Activated T-helper 2 cell treated with anti-CD3 and anti-CD28 coated beads, Interferon-gamma antibody, Interleukin-2, Interleukin-4, amounts not matched to agents 10 μg/mL and 5 μg/mL and 100 μg/mL, durations not matched to agents 14 hours and 24 hours and 36 hours (primary cell): ENCODE measurements at regions of chrX and their contacts with region 1.

Region 1: DNA sequence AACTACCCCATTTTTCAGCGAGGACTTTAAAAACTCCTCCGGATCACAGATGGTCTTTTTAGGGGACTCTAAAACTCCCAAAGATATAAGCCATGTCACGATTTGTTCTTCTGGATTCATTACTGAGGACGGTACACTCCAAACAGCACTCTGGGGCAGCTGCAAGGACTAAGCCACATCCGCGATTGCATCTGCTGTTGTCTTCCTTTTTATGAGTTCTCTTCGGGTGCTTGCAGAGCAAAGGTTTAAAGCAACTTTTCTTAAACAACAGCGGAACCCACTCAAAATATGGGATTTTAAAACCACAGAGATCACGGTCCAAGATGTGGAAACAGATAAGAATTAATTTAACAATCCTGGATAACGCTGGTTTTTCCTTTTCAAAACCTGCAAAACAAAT is at the start of gene ARHGEF6:
- DNase-seq: no peak
- H3K4me3 Mint-ChIP-seq: peak within 1 kb of the TSS; percentile 90
- H3K27ac Mint-ChIP-seq: peak within 1 kb of the TSS; percentile 97
- H3K4me1 Mint-ChIP-seq: peaks cover 56% of the 10 kb centered on the region
- H3K27me3 Mint-ChIP-seq: no peaks in the 10 kb centered on the region
- total RNA-seq, gene ARHGEF6: 77.2 and 77.9 TPM in 2 replicates

Region 2: DNA sequence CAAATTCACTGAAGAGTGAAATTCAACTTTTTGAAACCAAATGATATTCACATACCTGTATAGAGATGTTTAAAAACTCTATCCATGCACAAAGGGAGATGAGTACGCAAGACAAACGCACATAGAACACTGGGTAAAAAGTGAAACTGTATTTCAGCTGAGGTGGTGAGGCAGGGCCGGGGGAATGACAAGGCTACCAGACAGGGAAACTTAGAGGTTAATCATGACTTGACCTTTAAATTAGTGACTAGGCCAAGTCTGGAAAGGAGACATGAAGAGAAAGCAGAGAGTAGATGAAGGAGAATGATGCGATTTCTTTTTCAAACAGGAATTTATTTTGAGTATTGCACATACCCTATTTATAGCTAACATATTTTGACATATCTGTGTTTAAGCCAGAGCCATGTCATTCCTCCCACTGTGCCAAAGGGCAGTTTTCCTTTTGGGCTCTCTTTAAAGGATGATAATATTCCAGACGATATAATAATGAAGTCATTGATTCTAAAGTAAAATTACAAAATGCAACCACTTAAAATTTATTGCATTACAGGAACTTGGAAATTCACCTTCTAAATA is 49.5 kb before region 1 on chrX:
- intact Hi-C with region 1: loop called (anchors 5 kb)
- DNase-seq: no peak
- H3K4me3 Mint-ChIP-seq: peak overlapping the region; percentile 30
- H3K27ac Mint-ChIP-seq: peak overlapping the region; percentile 77
- H3K4me1 Mint-ChIP-seq: peaks cover 48% of the 10 kb centered on the region
- H3K27me3 Mint-ChIP-seq: no peaks in the 10 kb centered on the region

Region 3: GRCh38 chrX:136767104-136767941 is 13.4 kb before region 1 on chrX:
- intact Hi-C with region 1: loop called (anchors 1 kb)
- DNase-seq: no peak
- H3K4me3 Mint-ChIP-seq: peak overlapping the region; percentile 78
- H3K27ac Mint-ChIP-seq: peak overlapping the region; percentile 93
- H3K4me1 Mint-ChIP-seq: peaks cover 56% of the 10 kb centered on the region
- H3K27me3 Mint-ChIP-seq: no peaks in the 10 kb centered on the region

Region 4: DNA sequence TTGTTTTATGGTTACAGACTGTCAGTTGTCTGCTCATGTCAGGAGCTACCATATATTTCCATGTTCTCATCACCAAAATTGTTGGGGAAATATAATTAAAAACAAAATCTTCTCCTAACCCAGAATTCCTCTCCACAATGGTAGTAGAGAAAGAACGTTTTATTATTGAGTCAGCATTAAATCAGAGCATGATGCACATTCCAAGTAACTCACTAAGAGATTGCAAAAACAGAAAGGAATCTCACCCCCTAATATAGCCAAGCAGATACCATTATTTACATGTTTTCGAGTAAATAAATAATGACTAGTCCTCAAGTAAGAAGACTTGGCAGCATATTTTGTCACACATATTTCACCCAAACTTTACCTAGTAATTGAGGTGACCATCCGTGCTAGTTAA is 36.2 kb after region 1 on chrX:
- intact Hi-C with region 1: no loop called
- DNase-seq: no peak
- H3K4me3 Mint-ChIP-seq: no peak overlapping the region
- H3K27ac Mint-ChIP-seq: no peak overlapping the region
- H3K4me1 Mint-ChIP-seq: peaks cover 23% of the 10 kb centered on the region
- H3K27me3 Mint-ChIP-seq: no peaks in the 10 kb centered on the region

Region 5: DNA sequence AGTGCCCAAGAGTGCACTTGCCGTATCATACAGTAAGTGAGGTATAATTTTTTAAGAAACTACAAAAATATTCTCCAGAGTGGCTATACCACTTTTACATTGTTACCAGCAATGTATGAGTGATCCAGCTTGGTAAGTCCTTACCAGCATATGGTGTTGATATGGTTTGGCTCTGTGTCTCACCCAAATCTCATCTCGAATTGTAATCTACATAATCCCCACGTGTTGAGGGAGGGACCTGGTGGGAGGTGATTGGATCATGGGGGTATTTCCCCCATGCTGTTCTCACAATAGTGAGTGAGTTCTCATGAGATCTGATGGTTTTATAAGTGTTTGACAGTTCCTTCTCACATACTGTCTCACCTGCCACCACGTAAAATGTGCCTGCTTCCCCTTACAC is 55.0 kb after region 1 on chrX:
- intact Hi-C with region 1: no loop called
- DNase-seq: no peak
- H3K4me3 Mint-ChIP-seq: no peak overlapping the region
- H3K27ac Mint-ChIP-seq: no peak overlapping the region
- H3K4me1 Mint-ChIP-seq: peaks cover 7% of the 10 kb centered on the region
- H3K27me3 Mint-ChIP-seq: no peaks in the 10 kb centered on the region

Region 6: DNA sequence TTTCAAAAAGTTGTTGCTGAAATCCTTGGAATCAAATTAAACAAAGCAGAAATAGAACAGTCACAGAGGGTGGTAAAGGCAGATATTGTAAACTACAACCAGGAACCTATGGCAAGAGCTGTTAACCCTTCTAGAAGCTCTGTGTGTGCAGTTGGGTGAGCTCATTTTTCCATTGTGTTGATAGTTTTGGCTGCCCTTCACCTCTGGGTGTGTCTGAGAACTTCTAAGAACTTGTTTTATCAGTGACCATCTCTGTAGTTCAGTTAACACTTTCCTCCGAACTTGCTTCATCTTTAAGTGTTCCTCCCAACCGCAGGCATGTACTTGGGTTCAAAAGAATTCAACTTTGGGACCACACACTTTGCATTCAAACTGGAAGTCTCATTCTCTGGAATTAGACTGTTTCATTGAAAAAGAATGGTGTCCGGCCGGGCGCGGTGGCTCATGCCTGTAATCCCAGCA is 67.1 kb after region 1 on chrX:
- intact Hi-C with region 1: loop called (anchors 1 kb)
- DNase-seq: peak; percentile 17
- H3K4me3 Mint-ChIP-seq: peak overlapping the region; percentile 78
- H3K27ac Mint-ChIP-seq: peak overlapping the region; percentile 91
- H3K4me1 Mint-ChIP-seq: peaks cover 17% of the 10 kb centered on the region
- H3K27me3 Mint-ChIP-seq: no peaks in the 10 kb centered on the region

Region 7: GRCh38 chrX:136936183-136936549 is 155.4 kb after region 1 on chrX:
- intact Hi-C with region 1: loop called (anchors 5 kb)
- DNase-seq: no peak
- H3K4me3 Mint-ChIP-seq: peak overlapping the region; percentile 49
- H3K27ac Mint-ChIP-seq: peak overlapping the region; percentile 81
- H3K4me1 Mint-ChIP-seq: peaks cover 17% of the 10 kb centered on the region
- H3K27me3 Mint-ChIP-seq: no peaks in the 10 kb centered on the region